ENCODE measurements at regions of chr14 and their contacts with region 1.

Region 1: GRCh38 chr14:23269193-23269592 is 16.7 kb downstream of the HOMEZ start:
- DNase-seq: no peak
- H3K4me3 ChIP-seq: no peak overlapping the region
- H3K27ac ChIP-seq: no peak overlapping the region
- H3K4me1 ChIP-seq: no peaks in the 10 kb centered on the region
- H3K27me3 ChIP-seq: no peaks in the 10 kb centered on the region
- CTCF ChIP-seq: no peak

Region 2: GRCh38 chr14:23034483-23035302 is 234.5 kb before region 1 on chr14 and contains the start of gene PSMB5:
- CTCF ChIA-PET with region 1: no interaction called
- dilution Hi-C with region 1: no loop called
- in situ Hi-C with region 1: no loop called
- intact Hi-C with region 1: no loop called
- DNase-seq: peak; percentile 93
- H3K4me3 ChIP-seq: peak within 1 kb of the TSS; percentile 82 to 95 (median 88)
- H3K27ac ChIP-seq: peak within 1 kb of the TSS; percentile 83
- H3K4me1 ChIP-seq: peaks cover 7% of the 10 kb centered on the region
- H3K27me3 ChIP-seq: no peaks in the 10 kb centered on the region
- CTCF ChIP-seq: no peak
- total RNA-seq, gene PSMB5: 145 to 152 TPM

Region 3: DNA sequence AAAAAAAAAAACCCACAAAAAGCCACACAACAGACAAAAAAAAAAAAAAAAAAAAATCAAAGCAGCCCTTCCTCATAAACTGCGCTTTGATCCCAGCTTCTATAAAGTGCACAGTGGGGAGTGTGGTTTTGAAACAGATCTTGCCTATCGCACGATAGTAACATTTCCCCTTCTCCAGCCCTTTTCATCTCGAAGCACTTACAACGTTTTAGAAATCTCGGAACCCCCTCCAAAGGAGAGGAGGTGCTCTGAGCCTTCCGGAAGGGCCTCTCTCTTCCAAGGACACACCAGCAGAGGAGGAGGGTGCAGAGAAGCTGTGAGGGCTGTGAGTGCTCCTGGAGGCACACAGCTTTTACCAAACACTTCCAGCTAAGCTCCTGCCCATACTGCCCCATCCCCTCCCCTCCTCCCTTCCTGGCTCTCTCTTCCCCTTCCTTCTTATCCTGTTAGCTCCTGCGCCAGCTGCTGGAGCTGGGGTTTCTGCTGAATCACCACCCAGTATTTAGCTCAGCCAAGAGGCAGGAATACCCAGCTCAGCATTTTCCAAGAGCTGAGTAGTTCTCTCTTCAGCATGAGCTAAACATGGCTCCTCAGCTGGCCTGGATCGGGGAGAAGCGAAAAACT is 114.1 kb before region 1 on chr14:
- CTCF ChIA-PET with region 1: no interaction called
- dilution Hi-C with region 1: no loop called
- in situ Hi-C with region 1: no loop called
- intact Hi-C with region 1: no loop called
- DNase-seq: peak; percentile 58
- H3K4me3 ChIP-seq: no peak overlapping the region
- H3K27ac ChIP-seq: peak overlapping the region; percentile 50
- H3K4me1 ChIP-seq: peaks cover 27% of the 10 kb centered on the region
- H3K27me3 ChIP-seq: no peaks in the 10 kb centered on the region
- CTCF ChIP-seq: no peak

Region 4: GRCh38 chr14:23301288-23301968 is 32.2 kb after region 1 on chr14:
- CTCF ChIA-PET with region 1: interaction called, 18 read pairs
- dilution Hi-C with region 1: no loop called
- in situ Hi-C with region 1: no loop called
- intact Hi-C with region 1: loop called (anchors 1 kb)
- DNase-seq: peak; percentile 99
- H3K4me3 ChIP-seq: peak overlapping the region; percentile 61 to 76 (median 73)
- H3K27ac ChIP-seq: peak overlapping the region; percentile 79
- H3K4me1 ChIP-seq: peaks cover 41% of the 10 kb centered on the region
- H3K27me3 ChIP-seq: no peaks in the 10 kb centered on the region
- CTCF ChIP-seq: peak; percentile 38 to 74

Region 5: DNA sequence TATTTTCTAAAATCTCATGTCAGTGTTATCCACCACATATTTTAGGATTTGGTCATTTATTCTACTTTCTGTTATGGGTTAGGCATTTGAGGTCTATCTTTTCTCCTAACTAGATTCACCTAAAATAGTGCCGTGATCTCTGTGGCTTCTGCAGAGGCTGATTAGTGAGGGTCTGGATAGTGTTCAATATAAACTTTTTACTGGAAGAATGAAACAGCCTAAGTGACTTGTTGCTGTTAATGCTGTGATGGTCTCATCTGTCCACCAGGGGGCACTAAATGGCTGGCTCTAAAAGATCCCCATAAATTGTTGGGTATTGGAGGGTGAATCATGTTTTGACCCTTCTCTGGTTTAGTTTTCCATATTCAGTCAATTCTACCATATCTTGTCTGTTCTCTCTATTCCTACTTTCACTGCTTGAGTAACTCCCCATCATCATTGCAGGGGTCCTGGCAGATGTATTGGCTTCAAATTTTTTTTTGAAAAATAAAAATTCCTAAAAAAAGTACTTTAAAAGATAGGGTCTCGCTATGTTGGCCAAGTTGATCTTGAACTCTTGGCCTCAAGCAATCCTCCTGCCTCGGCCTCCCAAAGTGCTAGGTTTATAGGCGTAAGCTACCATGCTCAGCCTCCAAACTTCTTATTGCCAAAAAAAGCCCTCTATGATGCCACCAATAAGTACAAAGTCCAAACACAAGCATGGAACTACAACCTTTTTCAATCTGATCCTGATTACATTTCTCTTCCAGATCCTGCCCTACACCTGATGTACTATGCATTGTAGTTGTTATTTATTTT is 59.0 kb after region 1 on chr14:
- CTCF ChIA-PET with region 1: no interaction called
- dilution Hi-C with region 1: no loop called
- in situ Hi-C with region 1: no loop called
- intact Hi-C with region 1: loop called (anchors 1 kb)
- DNase-seq: peak; percentile 57
- H3K4me3 ChIP-seq: no peak overlapping the region
- H3K27ac ChIP-seq: no peak overlapping the region
- H3K4me1 ChIP-seq: peaks cover 6% of the 10 kb centered on the region
- H3K27me3 ChIP-seq: no peaks in the 10 kb centered on the region
- CTCF ChIP-seq: peak; percentile 83 to 91

Region 6: DNA sequence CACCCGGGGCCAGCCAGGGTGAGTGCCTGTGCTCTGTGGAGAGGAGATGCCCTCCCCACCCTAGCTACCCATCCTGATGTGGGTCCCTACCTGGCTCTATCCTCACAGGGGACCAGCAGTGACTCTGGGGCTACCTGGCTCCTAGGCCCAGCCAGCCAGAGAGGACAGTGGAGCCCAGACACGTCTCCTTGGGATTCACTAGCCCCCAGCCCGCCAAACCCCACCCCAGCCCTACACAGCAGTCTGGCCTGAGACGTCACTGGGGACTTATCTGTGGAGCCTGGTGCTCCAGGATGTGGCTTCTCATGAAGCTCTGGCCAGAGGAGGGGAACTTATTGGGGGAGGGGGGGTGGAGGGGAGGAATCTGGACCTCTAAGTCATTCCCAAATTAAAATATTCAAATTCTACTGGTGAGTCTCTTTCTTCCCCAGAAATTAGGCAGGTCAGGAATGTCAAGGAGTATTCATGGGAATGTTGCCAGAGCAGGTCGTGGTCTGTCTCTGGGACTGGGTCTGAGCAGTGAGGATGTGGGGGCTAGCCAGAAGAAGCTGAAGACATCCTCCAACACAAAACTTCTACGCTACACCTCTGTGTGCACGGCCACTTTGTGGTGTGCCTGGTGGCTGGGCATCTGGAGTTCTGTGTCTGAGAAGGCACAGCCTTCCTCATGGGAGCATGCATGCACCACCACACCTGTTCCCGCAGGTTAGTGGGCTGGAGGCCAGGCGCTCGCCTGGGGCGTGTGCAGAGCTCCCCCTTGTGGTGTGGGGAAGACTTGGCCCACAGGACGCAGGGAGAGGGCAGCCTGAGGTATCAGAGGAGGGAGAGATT is 110.4 kb after region 1 on chr14:
- CTCF ChIA-PET with region 1: no interaction called
- dilution Hi-C with region 1: no loop called
- in situ Hi-C with region 1: loop called in 1 of 2 experiments (anchors 10 kb)
- intact Hi-C with region 1: loop called (anchors 1 kb)
- DNase-seq: peak; percentile 55
- H3K4me3 ChIP-seq: no peak overlapping the region
- H3K27ac ChIP-seq: no peak overlapping the region
- H3K4me1 ChIP-seq: no peaks in the 10 kb centered on the region
- H3K27me3 ChIP-seq: no peaks in the 10 kb centered on the region
- CTCF ChIP-seq: peak; percentile 91 to 99

Region 7: GRCh38 chr14:23567192-23568020 is 298.2 kb after region 1 on chr14 and contains the start of gene AP1G2:
- CTCF ChIA-PET with region 1: no interaction called
- dilution Hi-C with region 1: no loop called
- in situ Hi-C with region 1: no loop called
- intact Hi-C with region 1: loop called (anchors 10 kb)
- DNase-seq: peak; percentile 84
- H3K4me3 ChIP-seq: peak within 1 kb of the TSS; percentile 60 to 77 (median 64)
- H3K27ac ChIP-seq: peak within 1 kb of the TSS; percentile 44
- H3K4me1 ChIP-seq: peaks cover 23% of the 10 kb centered on the region
- H3K27me3 ChIP-seq: no peaks in the 10 kb centered on the region
- CTCF ChIP-seq: no peak
- total RNA-seq, gene AP1G2: 54.7 to 132 TPM